ENCODE measurements at regions of chr5 and their contacts with region 1.

Region 1: GRCh38 chr5:177390363-177391300 is 6.4 kb downstream of the SLC34A1 start:
- DNase-seq: peak; percentile 78
- ATAC-seq: peak; percentile 85 to 88

Region 2: GRCh38 chr5:177454397-177455035 is 63.9 kb after region 1 on chr5:
- intact Hi-C with region 1: loop called (anchors 2 to 5 kb)
- DNase-seq: peak; percentile 93
- ATAC-seq: peak; percentile 69 to 74

Region 3: DNA sequence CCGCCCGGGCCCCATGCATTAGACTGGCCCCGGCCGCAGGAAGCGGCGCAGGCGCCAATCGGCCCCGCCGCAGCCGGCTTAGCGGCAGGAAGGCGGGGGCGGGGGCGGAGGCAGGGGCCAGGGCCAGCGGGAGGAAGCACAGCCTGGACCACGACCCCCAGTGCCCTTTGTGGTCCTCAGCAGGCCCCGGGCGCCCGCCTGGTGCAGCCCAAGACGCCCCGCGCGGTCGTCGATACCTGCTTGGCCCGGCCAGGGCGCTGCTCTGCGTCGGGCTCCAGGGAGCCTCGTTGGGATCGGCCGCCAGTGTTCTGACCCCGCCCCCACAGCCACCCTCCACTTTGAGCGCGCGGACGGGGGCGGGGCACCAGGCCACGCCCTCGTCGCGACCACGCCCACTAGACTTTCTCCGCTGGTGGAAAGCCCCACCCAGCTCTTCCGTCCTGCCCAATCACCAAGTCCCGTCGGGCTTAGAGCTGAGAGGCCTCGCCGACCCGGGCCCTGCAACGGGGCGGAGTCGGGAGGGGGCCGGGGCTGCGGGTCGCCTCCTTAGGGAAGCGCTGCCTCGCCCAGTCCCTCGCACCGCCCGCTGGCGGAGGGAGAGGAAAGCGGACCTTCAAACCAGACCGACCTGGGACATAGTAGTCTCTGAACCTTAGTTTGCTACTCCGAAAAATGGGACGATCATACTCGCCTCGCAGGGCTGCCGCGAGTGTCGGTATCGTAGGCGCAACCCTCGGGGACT is 106.8 kb after region 1 on chr5 and contains the start of gene PDLIM7:
- intact Hi-C with region 1: loop called (anchors 1 to 5 kb)
- DNase-seq: peak; percentile 96
- ATAC-seq: peak; percentile 80 to 87
- total RNA-seq, gene PDLIM7: 50.5 to 94.5 TPM

Region 4: GRCh38 chr5:178069909-178070308 is 679.3 kb after region 1 on chr5:
- intact Hi-C with region 1: loop called in 1 of 2 experiments (anchors 10 kb)
- DNase-seq: no peak
- ATAC-seq: peak in 1 of 2 donors; percentile 34

Measured in left cardiac atrium (tissue), 4 donors.